PC-3 (cell line): ENCODE measurements at regions of chr14 and their contacts with region 1.

Region 1: DNA sequence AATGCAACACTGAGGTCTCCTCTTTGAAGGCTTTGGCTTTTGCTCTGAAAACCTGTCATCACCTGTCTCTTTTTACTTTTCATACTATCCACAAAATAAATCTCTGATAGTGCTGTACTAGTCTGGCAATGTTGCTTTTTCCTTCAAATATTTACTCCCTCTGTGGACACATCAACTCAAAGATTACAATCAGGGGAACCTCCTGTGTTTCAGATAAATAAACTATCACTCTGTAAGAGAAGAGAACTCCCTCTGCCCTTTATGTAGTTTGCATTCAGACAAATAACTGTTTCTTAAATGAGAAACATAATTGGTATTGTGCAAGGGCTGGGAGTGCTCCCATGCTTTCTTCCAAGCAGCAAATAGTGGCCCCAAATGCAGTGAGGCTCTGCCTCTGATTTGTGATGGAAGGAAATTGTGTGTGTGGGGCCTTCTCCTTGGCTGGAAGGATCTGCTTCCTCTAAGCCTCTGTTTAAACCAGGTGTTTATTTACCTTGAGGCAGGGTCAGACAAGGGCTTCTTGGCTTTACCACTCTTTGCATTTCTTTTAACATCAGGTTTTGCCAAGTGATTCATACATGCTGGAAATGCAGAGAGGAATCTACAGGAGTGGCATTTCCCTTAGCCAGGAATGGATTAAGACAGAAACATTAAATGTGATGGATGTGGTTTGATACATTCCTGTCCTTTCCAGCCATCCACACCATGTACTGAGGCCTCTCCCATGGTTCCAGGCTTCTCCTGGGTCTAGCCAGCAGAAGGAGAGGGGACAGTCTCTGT is 69.0 kb downstream of the AKAP6 start:
- DNase-seq: peak; percentile 94
- ATAC-seq: peak; percentile 93
- H3K4me3 ChIP-seq: no peak overlapping the region
- H3K27ac ChIP-seq: peak overlapping the region; percentile 36
- H3K4me1 ChIP-seq: peaks cover 37% of the 10 kb centered on the region
- H3K27me3 ChIP-seq: no peaks in the 10 kb centered on the region
- CTCF ChIP-seq: no peak

Region 2: DNA sequence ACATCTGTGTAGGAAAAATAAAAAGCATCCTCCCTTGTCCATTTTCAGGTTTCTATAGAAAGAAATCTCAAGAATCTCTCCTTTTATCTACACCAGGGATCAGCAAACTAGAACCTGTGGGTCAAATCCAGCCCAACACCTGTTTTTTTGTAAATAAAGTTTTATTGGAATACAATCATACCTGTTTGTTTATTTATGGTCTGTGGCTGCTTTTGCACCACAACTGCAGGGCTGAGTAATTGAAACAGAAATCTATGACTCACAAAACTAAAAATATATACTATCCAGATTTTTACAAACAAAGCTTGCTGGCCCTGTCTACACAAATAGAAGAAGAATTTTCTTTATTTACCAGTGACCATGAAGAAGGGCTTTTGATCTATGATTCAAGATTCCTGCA is 1618.9 kb before region 1 on chr14:
- CTCF ChIA-PET with region 1: no interaction called
- POLR2A ChIA-PET with region 1: no interaction called
- intact Hi-C with region 1: no loop called
- DNase-seq: peak; percentile 89
- ATAC-seq: peak; percentile 97
- H3K4me3 ChIP-seq: no peak overlapping the region
- H3K27ac ChIP-seq: peak overlapping the region; percentile 8; the same call in 1 of the 2 replicates
- H3K4me1 ChIP-seq: peaks cover 17% of the 10 kb centered on the region
- H3K27me3 ChIP-seq: peaks cover 26% of the 10 kb centered on the region
- CTCF ChIP-seq: no peak

Region 3: DNA sequence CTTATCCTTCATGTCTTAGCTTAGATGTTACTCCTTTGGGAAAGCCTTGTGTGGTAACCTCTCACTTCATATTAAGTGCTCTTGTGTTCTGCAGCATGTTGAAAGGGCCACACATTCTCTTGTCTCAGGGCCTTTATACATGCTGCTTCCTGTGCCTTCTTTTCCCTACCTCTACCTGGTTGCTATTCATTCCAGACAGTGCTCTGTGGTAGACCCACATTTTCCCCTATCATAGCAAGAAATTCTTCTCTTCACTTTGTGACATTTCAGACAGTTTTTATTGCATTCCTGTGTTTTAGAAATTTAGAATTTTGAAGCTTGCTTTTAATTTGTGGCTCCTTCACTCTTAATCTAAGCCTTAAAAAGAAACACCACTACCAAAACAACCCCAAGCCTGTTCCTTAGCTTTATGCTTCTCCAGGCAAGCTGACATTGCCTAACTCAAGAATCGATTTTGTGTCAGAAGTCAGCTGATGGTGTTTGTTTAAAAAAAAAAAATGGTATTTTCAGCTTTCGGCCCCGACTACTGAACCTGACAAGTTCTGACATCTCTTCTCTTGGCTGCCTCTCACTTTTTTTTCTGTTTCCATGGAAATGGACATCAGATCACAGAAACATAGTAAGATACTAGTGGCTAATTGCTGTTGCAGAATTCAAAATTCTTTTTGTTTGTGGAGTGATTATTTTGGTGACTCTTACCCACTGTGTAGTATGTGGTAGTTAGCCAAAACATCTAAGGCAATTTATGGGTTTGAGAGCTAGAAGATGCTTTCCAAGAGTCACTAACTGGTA is 680.6 kb before region 1 on chr14:
- CTCF ChIA-PET with region 1: no interaction called
- POLR2A ChIA-PET with region 1: no interaction called
- intact Hi-C with region 1: no loop called
- DNase-seq: no peak
- ATAC-seq: no peak
- H3K4me3 ChIP-seq: no peak overlapping the region
- H3K27ac ChIP-seq: no peak overlapping the region
- H3K4me1 ChIP-seq: no peaks in the 10 kb centered on the region
- H3K27me3 ChIP-seq: no peaks in the 10 kb centered on the region
- CTCF ChIP-seq: no peak

Region 4: GRCh38 chr14:32277998-32278397 is 120.1 kb before region 1 on chr14:
- CTCF ChIA-PET with region 1: no interaction called
- POLR2A ChIA-PET with region 1: no interaction called
- intact Hi-C with region 1: no loop called
- DNase-seq: no peak
- ATAC-seq: no peak
- H3K4me3 ChIP-seq: no peak overlapping the region
- H3K27ac ChIP-seq: no peak overlapping the region
- H3K4me1 ChIP-seq: no peaks in the 10 kb centered on the region
- H3K27me3 ChIP-seq: no peaks in the 10 kb centered on the region
- CTCF ChIP-seq: no peak

Region 5: DNA sequence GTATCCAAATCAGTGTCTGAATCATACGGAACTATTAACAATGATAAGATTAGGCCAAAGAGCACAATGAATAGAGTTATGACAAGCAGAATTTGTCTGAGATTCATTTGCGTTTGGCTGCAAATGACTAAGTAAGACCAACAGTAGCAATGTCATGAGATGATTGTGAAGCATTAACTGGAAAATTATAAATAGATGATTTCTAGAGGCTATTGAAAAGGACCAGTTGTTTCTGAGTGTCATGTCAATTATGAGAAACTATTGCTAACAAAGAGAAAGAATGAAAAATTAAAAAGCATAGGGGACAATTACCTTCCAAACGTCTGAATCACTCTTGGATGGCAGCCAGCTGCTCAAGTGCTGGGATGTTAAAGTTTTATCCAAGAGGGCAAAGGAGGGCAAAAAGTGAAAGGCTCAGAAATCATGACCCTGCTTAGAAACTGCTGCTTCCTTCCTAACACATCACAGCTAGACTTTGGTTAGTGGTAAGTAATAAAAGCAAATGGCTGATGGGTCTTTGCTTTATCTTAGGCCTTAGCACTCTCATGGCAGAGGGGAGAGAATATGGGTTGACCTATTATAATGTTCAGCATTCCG is 20.0 kb after region 1 on chr14:
- CTCF ChIA-PET with region 1: no interaction called
- POLR2A ChIA-PET with region 1: interaction called, 3 read pairs
- intact Hi-C with region 1: loop called (anchors 1 kb)
- DNase-seq: peak; percentile 82
- ATAC-seq: peak; percentile 78
- H3K4me3 ChIP-seq: peak overlapping the region; percentile 1; the same call in 1 of the 2 replicates
- H3K27ac ChIP-seq: peak overlapping the region; percentile 51
- H3K4me1 ChIP-seq: peaks cover 48% of the 10 kb centered on the region
- H3K27me3 ChIP-seq: no peaks in the 10 kb centered on the region
- CTCF ChIP-seq: no peak

Region 6: DNA sequence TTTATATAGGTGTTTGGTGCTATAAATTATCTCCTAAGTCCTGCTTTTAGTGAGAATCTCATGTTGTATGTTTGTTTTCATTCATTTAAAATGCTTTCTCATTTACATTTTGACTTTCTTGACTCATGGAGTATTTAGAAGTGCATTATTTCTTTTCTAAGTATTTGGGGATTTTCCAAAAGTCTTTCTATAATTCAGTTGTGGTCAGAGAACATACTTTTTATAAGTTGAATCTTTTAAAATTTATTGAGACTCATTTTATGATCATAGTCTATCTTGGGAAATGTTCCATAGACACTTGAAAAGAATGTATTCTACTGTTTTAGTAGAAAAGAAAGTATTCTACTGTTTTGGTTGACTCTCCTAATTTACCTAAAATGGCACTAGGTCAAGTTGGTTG is 99.2 kb after region 1 on chr14:
- CTCF ChIA-PET with region 1: no interaction called
- POLR2A ChIA-PET with region 1: no interaction called
- intact Hi-C with region 1: no loop called
- DNase-seq: no peak
- ATAC-seq: no peak; the same call in 1 of the 2 replicates
- H3K4me3 ChIP-seq: no peak overlapping the region
- H3K27ac ChIP-seq: no peak overlapping the region
- H3K4me1 ChIP-seq: no peaks in the 10 kb centered on the region
- H3K27me3 ChIP-seq: no peaks in the 10 kb centered on the region
- CTCF ChIP-seq: no peak